ENCODE measurements at regions of chr4 and their contacts with region 1.

Region 1: GRCh38 chr4:121096629-121097028 is 24.3 kb upstream of the NDNF start:
- DNase-seq: no peak
- H3K4me3 ChIP-seq: no peak overlapping the region
- H3K27ac ChIP-seq: no peak overlapping the region
- H3K4me1 ChIP-seq: no peaks in the 10 kb centered on the region
- H3K27me3 ChIP-seq: no peaks in the 10 kb centered on the region
- CTCF ChIP-seq: peak; percentile 21 to 67 (median 58)
- POLR2A ChIP-seq: no peak

Region 2: GRCh38 chr4:120071192-120071795 is 1025.3 kb before region 1 on chr4:
- intact Hi-C with region 1: loop called (anchors 5 kb)
- DNase-seq: no peak
- H3K4me3 ChIP-seq: no peak overlapping the region
- H3K27ac ChIP-seq: no peak overlapping the region
- H3K4me1 ChIP-seq: no peaks in the 10 kb centered on the region
- H3K27me3 ChIP-seq: no peaks in the 10 kb centered on the region
- CTCF ChIP-seq: peak; percentile 27 to 79 (median 46)
- POLR2A ChIP-seq: no peak

Region 3: DNA sequence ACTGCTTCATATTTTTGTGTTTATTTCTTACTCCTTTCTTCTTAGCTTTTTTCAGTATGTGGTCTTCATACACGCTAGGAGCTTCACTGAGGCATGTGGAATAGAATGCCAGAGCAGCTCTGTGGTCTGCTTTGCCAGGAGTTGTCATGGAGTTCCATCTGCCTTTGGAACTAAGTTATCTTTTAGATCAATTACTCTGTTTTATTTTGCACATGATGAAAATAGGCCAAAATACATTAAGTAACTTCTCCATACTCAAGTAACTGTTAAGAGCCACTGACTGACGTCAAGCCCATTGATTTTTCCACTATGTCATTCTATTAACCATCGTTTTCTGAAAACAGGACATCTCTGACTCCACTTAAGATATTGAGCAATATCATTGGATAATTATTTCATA is 614.9 kb before region 1 on chr4:
- intact Hi-C with region 1: no loop called
- DNase-seq: no peak
- H3K4me3 ChIP-seq: no peak overlapping the region
- H3K27ac ChIP-seq: no peak overlapping the region
- H3K4me1 ChIP-seq: no peaks in the 10 kb centered on the region
- H3K27me3 ChIP-seq: no peaks in the 10 kb centered on the region
- CTCF ChIP-seq: no peak
- POLR2A ChIP-seq: no peak

Region 4: GRCh38 chr4:120718979-120719566 is 377.6 kb before region 1 on chr4:
- intact Hi-C with region 1: loop called (anchors 5 kb)
- DNase-seq: no peak
- H3K4me3 ChIP-seq: no peak overlapping the region
- H3K27ac ChIP-seq: no peak overlapping the region
- H3K4me1 ChIP-seq: no peaks in the 10 kb centered on the region
- H3K27me3 ChIP-seq: no peaks in the 10 kb centered on the region
- CTCF ChIP-seq: peak in 3 of 4 experiments; percentile 28 to 49 (median 36)
- POLR2A ChIP-seq: no peak

Region 5: GRCh38 chr4:121009578-121010478 is 86.8 kb before region 1 on chr4:
- intact Hi-C with region 1: no loop called
- DNase-seq: no peak
- H3K4me3 ChIP-seq: no peak overlapping the region
- H3K27ac ChIP-seq: no peak overlapping the region
- H3K4me1 ChIP-seq: no peaks in the 10 kb centered on the region
- H3K27me3 ChIP-seq: no peaks in the 10 kb centered on the region
- CTCF ChIP-seq: no peak
- POLR2A ChIP-seq: no peak